Prostate gland (tissue), 2 donors: ENCODE measurements at regions of chr18 and their contacts with region 1.

Region 1: DNA sequence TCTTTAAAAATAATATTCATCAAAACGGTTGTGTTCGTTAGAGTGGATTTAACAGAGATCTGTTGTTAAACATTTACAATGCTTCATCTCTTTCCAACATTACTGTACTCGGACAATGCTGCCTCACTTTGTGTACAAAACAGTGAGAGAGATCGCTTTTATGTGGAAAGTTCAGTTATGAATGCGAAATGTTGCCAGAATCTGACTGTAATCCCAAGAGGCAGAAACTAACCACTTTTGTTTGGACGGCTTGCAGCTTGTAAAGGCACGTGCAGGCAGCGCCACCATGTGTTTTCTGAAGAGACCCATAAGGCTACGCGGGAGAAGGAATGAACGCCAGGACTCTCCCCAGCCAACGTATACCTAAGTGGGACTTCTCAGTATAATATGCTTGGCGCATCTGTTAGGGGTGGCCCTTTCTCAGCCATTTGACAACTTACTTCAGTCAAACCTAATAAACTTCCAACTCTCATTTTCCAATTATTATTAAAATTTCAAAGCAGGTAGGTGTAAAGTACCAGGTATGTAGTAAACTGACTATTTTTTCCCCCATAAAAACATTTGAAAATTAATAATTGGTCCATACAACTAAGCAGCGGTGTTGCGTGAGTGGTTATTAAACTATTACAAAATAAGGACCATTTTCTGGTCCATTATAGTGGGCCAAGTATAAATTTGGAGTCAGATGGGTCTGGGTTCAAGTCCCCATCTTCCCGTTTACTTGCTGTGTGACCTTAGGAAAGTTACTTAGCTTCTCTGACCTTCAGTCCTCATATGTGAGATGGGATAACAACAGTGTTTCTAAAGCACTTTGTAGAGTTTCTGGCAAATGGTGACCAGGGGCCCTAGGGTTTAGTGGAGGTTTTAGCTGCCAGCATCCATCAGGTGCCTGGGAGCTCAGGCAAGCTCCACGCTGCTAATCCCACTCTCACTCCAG is 5.6 kb upstream of the NAPG start:
- DNase-seq: peak; percentile 87
- H3K4me3 ChIP-seq: no peak overlapping the region
- H3K27ac ChIP-seq: peak overlapping the region; percentile 13 to 41
- H3K4me1 ChIP-seq: peaks cover 3% of the 10 kb centered on the region
- H3K27me3 ChIP-seq: no peaks in the 10 kb centered on the region
- CTCF ChIP-seq: peak; percentile 48 to 87 (median 78)
- POLR2A ChIP-seq: no peak

Region 2: GRCh38 chr18:9817725-9818422 is 702.4 kb before region 1 on chr18:
- intact Hi-C with region 1: no loop called
- DNase-seq: no peak
- H3K4me3 ChIP-seq: no peak overlapping the region
- H3K27ac ChIP-seq: no peak overlapping the region
- H3K4me1 ChIP-seq: no peaks in the 10 kb centered on the region
- H3K27me3 ChIP-seq: no peaks in the 10 kb centered on the region
- CTCF ChIP-seq: no peak
- POLR2A ChIP-seq: no peak

Region 3: DNA sequence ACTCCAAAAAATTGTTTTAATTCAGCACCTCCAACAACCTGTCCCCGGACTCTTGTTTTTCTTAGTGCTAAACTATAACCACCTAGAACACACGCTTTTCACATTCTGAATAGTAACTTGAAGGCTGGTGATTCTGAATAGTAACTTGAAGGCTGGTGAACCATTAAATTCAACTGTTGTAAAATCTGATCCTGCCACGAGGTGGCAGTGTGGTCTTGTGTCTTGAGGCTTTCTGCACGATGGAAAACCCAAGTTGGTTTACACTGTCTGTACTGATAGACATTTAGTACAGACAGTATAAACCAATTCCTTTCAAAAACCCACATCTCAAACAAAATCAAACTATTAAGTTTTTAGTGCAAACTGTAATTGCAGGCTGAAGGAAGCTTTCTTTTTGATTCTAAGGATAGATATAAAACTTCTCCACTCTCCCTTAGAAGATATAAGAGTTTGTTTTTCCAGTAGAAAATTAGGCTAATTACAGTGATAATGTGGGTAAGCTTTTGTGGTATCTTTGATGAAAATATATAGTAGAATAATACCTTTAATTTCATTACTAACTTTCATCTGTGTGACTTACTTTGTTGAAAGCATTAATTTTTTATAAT is 548.9 kb before region 1 on chr18:
- intact Hi-C with region 1: loop called (anchors 1 kb)
- DNase-seq: peak; percentile 86
- H3K4me3 ChIP-seq: no peak overlapping the region
- H3K27ac ChIP-seq: no peak overlapping the region
- H3K4me1 ChIP-seq: no peaks in the 10 kb centered on the region
- H3K27me3 ChIP-seq: no peaks in the 10 kb centered on the region
- CTCF ChIP-seq: peak; percentile 62 to 90 (median 88)
- POLR2A ChIP-seq: no peak

Region 4: GRCh38 chr18:10006311-10006893 is 513.9 kb before region 1 on chr18:
- intact Hi-C with region 1: loop called (anchors 2 kb)
- DNase-seq: no peak
- H3K4me3 ChIP-seq: no peak overlapping the region
- H3K27ac ChIP-seq: no peak overlapping the region
- H3K4me1 ChIP-seq: no peaks in the 10 kb centered on the region
- H3K27me3 ChIP-seq: no peaks in the 10 kb centered on the region
- CTCF ChIP-seq: peak in 2 of 4 experiments; percentile 20 to 25
- POLR2A ChIP-seq: no peak

Region 5: GRCh38 chr18:10041180-10041579 is 479.1 kb before region 1 on chr18:
- intact Hi-C with region 1: loop called (anchors 5 kb)
- DNase-seq: peak; percentile 16
- H3K4me3 ChIP-seq: no peak overlapping the region
- H3K27ac ChIP-seq: peak overlapping the region; percentile 26 to 51
- H3K4me1 ChIP-seq: peaks cover 4% of the 10 kb centered on the region
- H3K27me3 ChIP-seq: no peaks in the 10 kb centered on the region
- CTCF ChIP-seq: no peak
- POLR2A ChIP-seq: no peak

Region 6: DNA sequence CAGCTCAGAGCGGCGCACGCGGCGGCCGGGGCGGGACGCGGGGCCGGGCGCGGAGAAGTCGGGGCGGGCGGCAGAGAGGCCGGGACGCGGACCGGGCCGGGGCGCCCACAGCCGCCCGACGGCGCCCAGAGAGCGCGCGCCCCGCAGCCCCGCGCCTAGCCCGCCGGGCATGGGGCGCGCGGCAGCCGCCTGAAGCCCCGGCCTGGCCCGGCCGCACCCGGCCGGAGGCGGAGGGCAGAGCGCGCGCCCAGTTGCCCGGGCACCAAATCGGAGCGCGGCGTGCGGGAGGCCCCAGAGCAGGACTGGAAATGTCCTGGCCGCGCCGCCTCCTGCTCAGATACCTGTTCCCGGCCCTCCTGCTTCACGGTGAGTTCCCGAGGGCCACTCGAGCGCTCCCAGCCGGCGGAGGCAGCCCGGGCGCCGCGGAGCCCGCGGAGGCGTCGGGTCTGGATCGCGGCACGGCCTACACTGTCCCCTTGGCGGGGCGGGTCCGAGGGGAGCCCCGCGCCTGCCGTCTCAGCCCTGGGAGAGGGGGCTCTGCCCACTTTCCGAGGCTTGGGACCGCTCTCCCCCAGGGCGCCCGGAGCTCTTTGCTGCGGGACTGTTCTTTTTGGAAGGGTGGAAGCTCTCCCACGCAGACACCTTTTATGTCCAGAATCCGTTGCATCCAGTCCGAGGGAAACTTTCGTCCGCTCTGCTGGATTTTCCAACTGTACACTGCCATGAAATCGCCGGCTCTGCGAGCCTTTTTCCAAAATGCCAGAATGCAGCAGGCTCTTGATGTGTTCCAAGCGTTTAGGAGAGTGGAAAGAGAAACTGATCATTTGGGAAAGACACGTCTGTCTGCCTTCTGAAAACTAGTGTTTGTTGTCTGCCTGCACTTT is 65.4 kb before region 1 on chr18:
- intact Hi-C with region 1: loop called (anchors 5 kb)
- DNase-seq: peak; percentile 30
- H3K4me3 ChIP-seq: peak overlapping the region; percentile 64 to 75
- H3K27ac ChIP-seq: peak overlapping the region; percentile 85 to 88
- H3K4me1 ChIP-seq: peaks cover 2% of the 10 kb centered on the region
- H3K27me3 ChIP-seq: no peaks in the 10 kb centered on the region
- CTCF ChIP-seq: no peak
- POLR2A ChIP-seq: no peak

Region 7: GRCh38 chr18:10591896-10592295 is 71.6 kb after region 1 on chr18:
- intact Hi-C with region 1: no loop called
- DNase-seq: no peak
- H3K4me3 ChIP-seq: no peak overlapping the region
- H3K27ac ChIP-seq: no peak overlapping the region
- H3K4me1 ChIP-seq: no peaks in the 10 kb centered on the region
- H3K27me3 ChIP-seq: no peaks in the 10 kb centered on the region
- CTCF ChIP-seq: no peak
- POLR2A ChIP-seq: no peak

Region 8: DNA sequence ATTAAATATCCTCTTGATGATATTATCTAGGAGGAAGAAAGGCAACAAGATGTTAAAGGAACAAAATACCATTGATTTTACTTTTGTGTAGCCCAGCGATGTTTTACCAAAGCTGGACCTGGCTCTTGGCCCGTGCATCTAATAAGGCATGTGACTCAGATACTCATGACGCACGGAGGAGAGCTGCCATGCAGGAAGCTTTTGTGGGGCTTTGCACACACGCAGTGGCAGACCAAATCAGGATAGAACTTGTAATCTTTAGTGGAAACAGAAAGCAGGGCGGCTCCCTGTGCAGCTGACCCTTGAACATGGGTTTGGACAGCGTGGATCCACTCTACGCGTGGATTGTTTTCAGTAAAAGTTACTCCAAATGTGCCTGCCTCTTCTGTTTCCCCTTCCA is 195.5 kb after region 1 on chr18:
- intact Hi-C with region 1: no loop called
- DNase-seq: no peak
- H3K4me3 ChIP-seq: no peak overlapping the region
- H3K27ac ChIP-seq: no peak overlapping the region
- H3K4me1 ChIP-seq: no peaks in the 10 kb centered on the region
- H3K27me3 ChIP-seq: no peaks in the 10 kb centered on the region
- CTCF ChIP-seq: no peak
- POLR2A ChIP-seq: no peak